Esophagus muscularis mucosa (tissue), 4 donors: ENCODE measurements at regions of chr1 and their contacts with region 1.

Region 1: DNA sequence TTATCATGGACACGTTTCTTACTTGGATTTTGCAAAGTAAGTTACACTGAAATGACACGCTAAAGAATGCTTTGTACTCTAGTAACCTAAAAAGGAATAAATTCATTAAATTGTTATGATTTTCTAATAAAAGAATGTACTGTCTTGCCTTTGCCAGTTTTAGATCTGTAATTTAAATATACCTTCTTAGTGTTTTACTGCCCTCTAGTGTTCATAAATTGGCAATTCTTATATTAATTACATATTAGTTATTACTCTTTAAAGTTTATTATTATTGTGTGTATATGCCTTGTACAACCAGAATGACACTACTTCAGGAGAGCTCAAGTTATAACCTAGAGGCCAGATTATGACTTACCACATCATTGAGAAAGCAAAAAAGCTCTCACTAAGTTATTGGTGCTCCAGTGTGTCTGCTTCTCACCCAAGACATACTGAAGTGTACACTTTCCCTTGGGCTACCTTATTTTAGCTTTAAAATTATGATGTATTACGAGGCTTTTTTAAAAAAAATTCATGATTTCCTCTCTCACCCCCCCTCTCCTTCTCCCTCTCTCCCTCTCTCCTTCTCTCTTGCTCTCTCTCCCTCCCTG is 169.9 kb downstream of the HS2ST1 start:
- DNase-seq: no peak
- H3K4me3 ChIP-seq: no peak overlapping the region
- H3K27ac ChIP-seq: no peak overlapping the region
- H3K4me1 ChIP-seq: peaks cover 0 to 6% (median 3%) of the 10 kb centered on the region in 4 donors
- H3K27me3 ChIP-seq: no peaks in the 10 kb centered on the region
- CTCF ChIP-seq: peak; percentile 33 to 70 (median 60)
- EP300 ChIP-seq: no peak
- POLR2A ChIP-seq: no peak

Region 2: DNA sequence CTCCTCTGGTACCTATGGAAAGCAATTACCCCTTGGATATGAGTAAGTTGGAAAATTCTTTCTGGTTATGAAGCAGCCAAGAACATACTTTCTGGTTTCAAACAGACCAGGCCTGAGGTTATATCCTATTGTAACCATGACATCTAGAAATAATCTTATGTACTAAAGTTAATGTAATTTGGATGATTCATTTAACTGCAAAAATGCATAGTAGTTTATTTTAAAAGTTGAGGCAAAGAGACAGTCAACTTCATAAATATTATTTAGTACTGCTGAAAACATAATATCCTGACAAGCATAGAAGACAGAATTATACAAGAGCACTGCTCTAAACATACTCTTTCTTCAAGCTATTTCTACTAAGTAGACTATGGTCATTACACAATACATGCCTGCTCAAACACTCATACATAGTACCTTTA is 713.7 kb before region 1 on chr1:
- intact Hi-C with region 1: loop called (anchors 10 kb)
- DNase-seq: no peak
- H3K4me3 ChIP-seq: no peak overlapping the region
- H3K27ac ChIP-seq: no peak overlapping the region
- H3K4me1 ChIP-seq: no peaks in the 10 kb centered on the region
- H3K27me3 ChIP-seq: no peaks in the 10 kb centered on the region
- CTCF ChIP-seq: no peak
- EP300 ChIP-seq: no peak
- POLR2A ChIP-seq: no peak

Region 3: GRCh38 chr1:86470859-86471258 is 613.5 kb before region 1 on chr1:
- intact Hi-C with region 1: loop called (anchors 10 kb)
- DNase-seq: no peak
- H3K4me3 ChIP-seq: no peak overlapping the region
- H3K27ac ChIP-seq: no peak overlapping the region
- H3K4me1 ChIP-seq: no peaks in the 10 kb centered on the region
- H3K27me3 ChIP-seq: no peaks in the 10 kb centered on the region
- CTCF ChIP-seq: no peak
- EP300 ChIP-seq: no peak
- POLR2A ChIP-seq: no peak

Region 4: DNA sequence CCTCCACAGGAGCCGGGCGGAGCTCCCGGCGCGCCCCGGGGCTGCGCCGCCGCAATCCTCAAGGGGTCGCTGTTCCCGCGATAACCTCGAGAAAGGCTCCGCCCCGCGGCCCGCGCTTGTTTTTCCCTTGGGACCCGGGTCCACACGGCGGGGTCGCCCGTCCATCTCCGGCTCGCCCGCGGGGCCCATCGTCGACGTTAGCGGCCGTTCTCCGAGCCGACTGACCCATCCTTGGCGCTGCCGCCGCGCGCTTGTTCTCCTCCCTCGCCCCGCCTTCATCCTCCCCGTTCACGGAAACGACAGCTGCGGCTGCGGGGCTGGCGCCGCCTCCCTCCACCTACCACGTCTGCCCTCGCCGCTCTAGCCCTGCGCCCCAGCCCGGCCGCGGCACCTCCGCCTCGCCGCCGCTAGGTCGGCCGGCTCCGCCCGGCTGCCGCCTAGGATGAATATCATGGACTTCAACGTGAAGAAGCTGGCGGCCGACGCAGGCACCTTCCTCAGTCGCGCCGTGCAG is 379.8 kb before region 1 on chr1 and contains the start of gene SH3GLB1:
- intact Hi-C with region 1: loop called (anchors 10 kb)
- DNase-seq: peak; percentile 97
- H3K4me3 ChIP-seq: peak within 1 kb of the TSS; percentile 74 to 95 (median 94)
- H3K27ac ChIP-seq: peak within 1 kb of the TSS; percentile 91 to 98 (median 98)
- H3K4me1 ChIP-seq: peaks cover 36 to 49% (median 46%) of the 10 kb centered on the region in 4 donors
- H3K27me3 ChIP-seq: no peaks in the 10 kb centered on the region
- CTCF ChIP-seq: peak; percentile 83 to 94 (median 89)
- EP300 ChIP-seq: no peak
- POLR2A ChIP-seq: peak; percentile 4
- total RNA-seq, gene SH3GLB1: 56.2 to 73.1 (median 61.8) TPM

Region 5: GRCh38 chr1:86833461-86834215 is 250.7 kb before region 1 on chr1:
- intact Hi-C with region 1: loop called (anchors 1 kb)
- DNase-seq: no peak
- H3K4me3 ChIP-seq: no peak overlapping the region
- H3K27ac ChIP-seq: no peak overlapping the region
- H3K4me1 ChIP-seq: peaks cover 0 to 6% (median 3%) of the 10 kb centered on the region in 4 donors
- H3K27me3 ChIP-seq: no peaks in the 10 kb centered on the region
- CTCF ChIP-seq: peak; percentile 58 to 68 (median 64)
- EP300 ChIP-seq: no peak
- POLR2A ChIP-seq: no peak